ENCODE measurements at regions of chr7 and their contacts with region 1.

Region 1: GRCh38 chr7:94436018-94436604 is 41.4 kb downstream of the COL1A2 start:
- DNase-seq: peak; percentile 62
- ATAC-seq: peak; percentile 69 to 86

Region 2: GRCh38 chr7:93245525-93246432 is 1190.3 kb before region 1 on chr7:
- intact Hi-C with region 1: loop called in 1 of 2 experiments (anchors 5 kb)
- DNase-seq: no peak
- ATAC-seq: no peak

Region 3: GRCh38 chr7:94223375-94224070 is 212.6 kb before region 1 on chr7:
- intact Hi-C with region 1: no loop called
- DNase-seq: no peak
- ATAC-seq: peak in 1 of 2 donors; percentile 29

Region 4: GRCh38 chr7:94289071-94289470 is 147.0 kb before region 1 on chr7:
- intact Hi-C with region 1: loop called (anchors 5 to 10 kb)
- DNase-seq: peak; percentile 67
- ATAC-seq: peak; percentile 91 to 92

Region 5: DNA sequence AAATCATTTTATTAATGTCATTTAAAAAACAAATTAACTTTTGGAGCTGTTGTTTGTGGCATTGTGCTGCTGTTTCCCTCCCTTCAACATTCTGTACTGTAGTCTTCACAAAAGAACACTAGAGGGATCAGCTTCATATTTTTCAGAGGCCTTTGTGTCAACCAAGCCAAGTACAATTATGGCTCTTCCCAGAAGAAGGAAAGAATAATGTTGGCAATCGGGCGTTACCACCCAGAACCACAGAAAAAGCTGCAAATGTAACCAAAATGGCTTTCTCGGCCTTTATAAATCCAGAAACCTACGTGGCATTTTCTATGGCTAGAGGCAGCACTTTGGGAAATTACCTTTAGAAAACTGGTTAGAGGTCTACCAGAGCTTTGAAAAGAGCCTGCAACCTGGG is 140.3 kb before region 1 on chr7:
- intact Hi-C with region 1: loop called in 1 of 2 experiments (anchors 10 kb)
- DNase-seq: no peak
- ATAC-seq: peak; percentile 67 to 82

Region 6: GRCh38 chr7:95476904-95477594 is 1040.9 kb after region 1 on chr7:
- intact Hi-C with region 1: loop called in 1 of 2 experiments (anchors 10 kb)
- DNase-seq: peak; percentile 72
- ATAC-seq: peak; percentile 79 to 82